ENCODE measurements at regions of chr1 and their contacts with region 1.

Region 1: GRCh38 chr1:37434292-37434907 is 40.0 kb upstream of the ZC3H12A start:
- DNase-seq: peak; percentile 86

Region 2: GRCh38 chr1:36516372-36517325 is 917.8 kb before region 1 on chr1:
- intact Hi-C with region 1: loop called (anchors 10 kb)
- DNase-seq: peak; percentile 87

Region 3: GRCh38 chr1:36576118-36576517 is 858.3 kb before region 1 on chr1:
- intact Hi-C with region 1: loop called (anchors 5 kb)
- DNase-seq: no peak

Region 4: GRCh38 chr1:36703526-36704208 is 730.7 kb before region 1 on chr1:
- intact Hi-C with region 1: loop called (anchors 5 kb)
- DNase-seq: peak; percentile 81

Region 5: DNA sequence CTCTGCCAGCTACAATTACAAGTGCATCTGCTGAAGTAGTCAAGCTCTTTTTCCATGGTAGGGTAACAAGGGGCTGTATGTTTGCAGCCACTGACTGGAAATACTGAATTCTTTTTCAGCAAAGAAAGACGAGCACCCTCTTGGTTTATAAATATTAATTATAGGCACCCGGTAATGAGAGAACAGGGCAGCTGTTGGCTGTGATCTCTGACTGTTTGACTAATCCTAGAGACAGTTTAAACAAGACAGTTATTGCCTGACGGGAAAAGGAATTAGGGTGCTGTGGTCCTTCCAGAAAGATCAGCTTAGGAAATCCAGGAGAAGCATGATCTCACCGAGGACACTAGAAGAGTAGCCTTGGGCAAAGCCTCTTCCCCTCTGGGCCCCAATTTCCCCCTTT is 143.7 kb before region 1 on chr1:
- intact Hi-C with region 1: no loop called
- DNase-seq: no peak

Region 6: DNA sequence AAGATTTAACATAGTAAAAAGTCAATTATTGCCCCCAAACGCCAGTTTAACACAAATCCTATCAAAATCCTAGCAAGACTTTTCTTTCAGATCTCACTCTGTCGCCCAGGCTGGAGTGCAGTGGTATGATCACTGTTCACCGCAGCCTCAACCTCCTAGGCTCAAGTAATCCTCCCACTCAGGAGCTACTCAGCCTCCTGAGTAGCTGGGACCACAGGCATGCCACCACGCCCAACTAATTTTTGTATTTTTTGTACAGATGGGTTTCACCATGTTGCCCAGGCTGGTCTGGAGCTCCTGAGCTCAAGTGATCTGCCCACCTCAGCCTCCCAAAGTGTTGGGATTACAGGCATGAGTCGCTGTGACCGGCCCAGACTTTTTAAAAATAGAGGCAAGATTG is 114.9 kb after region 1 on chr1:
- intact Hi-C with region 1: no loop called
- DNase-seq: no peak

Measured in cardiac septum (tissue), 1 donor.